ENCODE measurements at regions of chr6 and their contacts with region 1.

Region 1: GRCh38 chr6:29752451-29753308 is 29.4 kb downstream of the HLA-F start:
- DNase-seq: peak; percentile 79
- H3K4me3 Mint-ChIP-seq: peak overlapping the region; percentile 92
- H3K27ac Mint-ChIP-seq: peak overlapping the region; percentile 89
- H3K4me1 Mint-ChIP-seq: peaks cover 34% of the 10 kb centered on the region
- H3K27me3 Mint-ChIP-seq: no peaks in the 10 kb centered on the region

Region 2: DNA sequence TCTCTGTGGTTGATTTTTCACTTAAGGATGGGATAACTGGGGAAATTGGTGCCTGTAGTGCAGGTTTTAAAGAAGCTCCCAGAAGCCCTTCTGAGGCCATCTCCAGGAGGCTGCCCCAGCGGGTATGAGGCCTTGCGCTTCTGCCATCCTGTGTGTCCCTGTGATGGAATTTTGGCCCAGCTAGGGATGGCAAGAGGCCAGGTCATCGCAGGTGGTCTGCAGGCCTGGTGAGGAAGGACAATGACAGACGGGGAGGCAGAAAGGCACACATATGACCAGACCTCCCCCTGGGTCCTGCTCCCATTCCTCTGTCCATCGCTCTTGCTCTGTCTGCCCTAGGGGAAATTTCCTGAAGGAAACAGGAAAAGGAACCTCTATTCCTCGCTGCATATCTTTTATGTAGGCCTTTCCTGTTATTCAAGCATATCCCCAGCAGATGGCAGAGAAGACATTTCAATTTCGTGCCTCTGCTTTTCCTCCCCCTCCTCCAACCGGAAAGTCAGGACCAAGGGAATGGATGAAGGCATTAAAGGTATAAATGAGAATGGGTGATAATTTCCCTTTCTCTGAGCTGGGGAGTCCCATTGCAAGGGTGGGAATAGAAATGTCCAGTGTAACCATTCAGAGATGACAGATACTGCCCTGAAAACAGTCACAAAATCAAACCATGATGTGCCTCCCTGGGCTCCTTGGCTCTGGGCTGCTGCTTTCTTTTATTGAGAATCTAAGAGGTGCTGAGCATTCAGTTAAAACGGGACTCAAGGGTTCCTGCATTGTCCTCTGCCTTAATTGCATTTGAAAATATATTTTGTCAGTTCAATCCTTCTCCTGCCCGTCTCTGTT is 47.1 kb before region 1 on chr6:
- intact Hi-C with region 1: loop called (anchors 1 kb)
- DNase-seq: no peak
- H3K4me3 Mint-ChIP-seq: no peak overlapping the region
- H3K27ac Mint-ChIP-seq: no peak overlapping the region
- H3K4me1 Mint-ChIP-seq: peaks cover 40% of the 10 kb centered on the region
- H3K27me3 Mint-ChIP-seq: peaks cover 17% of the 10 kb centered on the region

Region 3: GRCh38 chr6:29737707-29738630 is 14.7 kb before region 1 on chr6:
- intact Hi-C with region 1: loop called (anchors 2 kb)
- DNase-seq: peak; percentile 58
- H3K4me3 Mint-ChIP-seq: no peak overlapping the region
- H3K27ac Mint-ChIP-seq: no peak overlapping the region
- H3K4me1 Mint-ChIP-seq: peaks cover 4% of the 10 kb centered on the region
- H3K27me3 Mint-ChIP-seq: no peaks in the 10 kb centered on the region